ENCODE measurements at regions of chr17 and their contacts with region 1.

Region 1: DNA sequence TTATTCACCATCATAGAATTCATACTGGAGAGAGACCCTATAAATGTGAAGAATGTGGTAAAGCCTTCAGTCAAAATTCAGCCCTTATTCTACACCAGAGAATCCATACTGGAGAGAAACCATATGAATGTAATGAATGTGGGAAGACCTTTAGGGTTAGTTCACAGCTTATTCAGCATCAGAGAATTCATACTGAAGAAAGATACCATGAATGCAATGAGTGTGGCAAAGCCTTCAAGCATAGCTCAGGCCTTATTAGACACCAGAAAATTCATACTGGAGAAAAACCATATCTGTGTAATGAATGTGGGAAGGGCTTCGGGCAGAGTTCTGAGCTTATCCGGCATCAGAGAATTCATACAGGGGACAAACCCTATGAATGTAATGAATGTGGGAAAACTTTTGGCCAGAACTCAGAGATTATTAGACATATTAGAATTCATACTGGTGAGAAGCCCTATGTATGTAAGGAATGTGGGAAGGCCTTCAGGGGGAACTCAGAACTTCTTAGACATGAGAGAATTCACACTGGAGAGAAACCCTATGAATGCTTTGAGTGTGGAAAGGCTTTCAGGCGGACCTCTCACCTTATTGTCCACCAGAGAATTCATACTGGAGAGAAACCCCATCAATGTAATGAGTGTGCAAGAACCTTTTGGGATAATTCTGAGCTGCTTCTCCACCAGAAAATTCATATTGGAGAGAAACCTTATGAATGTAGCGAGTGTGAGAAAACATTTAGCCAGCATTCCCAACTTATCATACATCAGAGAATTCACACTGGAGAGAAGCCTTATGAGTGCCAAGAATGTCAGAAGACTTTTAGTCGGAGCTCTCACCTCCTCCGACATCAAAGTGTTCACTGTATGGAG is 14.1 kb downstream of the ZFP3 start:
- DNase-seq: no peak
- H3K4me3 ChIP-seq: peak overlapping the region in 1 of 3 donors; percentile 1
- H3K27ac ChIP-seq: no peak overlapping the region
- H3K4me1 ChIP-seq: no peaks in the 10 kb centered on the region
- H3K27me3 ChIP-seq: no peaks in the 10 kb centered on the region
- CTCF ChIP-seq: no peak

Region 2: DNA sequence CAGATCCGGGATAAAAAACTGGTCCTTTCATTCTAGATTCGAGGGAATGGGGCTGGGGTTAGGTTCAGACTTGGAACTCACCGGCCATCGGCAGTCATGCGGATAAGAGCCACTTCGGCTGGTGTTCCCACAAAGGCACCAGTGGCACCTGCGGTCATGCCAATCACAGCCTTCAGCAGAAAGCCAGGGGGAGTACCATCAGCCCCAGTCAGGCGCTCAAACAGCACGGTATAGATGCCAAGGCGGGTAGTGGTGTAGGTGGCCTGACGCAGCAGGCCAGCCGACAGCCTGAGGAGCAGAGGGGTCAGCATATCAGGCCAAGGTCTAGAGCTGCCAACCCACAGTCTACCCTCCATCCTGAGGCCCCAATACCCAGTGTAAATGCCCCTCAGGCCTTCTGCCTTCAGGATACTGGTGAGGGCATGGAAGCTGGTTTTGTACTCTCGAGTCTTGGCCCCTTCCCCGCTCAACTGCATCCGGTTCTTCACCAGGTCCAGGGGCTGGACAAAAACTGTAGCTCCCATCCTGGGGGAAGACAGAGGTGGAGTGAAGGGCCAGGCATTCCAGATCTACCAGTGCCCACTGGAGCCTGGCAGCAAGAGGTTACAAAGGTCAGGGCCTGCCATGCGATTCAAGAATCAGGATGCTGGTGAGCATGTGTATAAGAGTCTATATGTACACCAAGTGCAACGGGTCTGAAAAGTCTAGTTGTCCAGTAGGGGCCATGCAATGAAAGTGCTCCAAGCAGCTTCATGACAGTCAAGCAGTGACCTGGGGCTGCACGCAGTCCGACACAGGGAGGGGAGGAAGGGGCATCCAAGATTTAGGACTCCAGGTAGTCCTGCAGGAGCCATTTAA is 153.5 kb before region 1 on chr17:
- intact Hi-C with region 1: no loop called
- DNase-seq: peak in 2 of 5 donors; percentile 51 to 57
- H3K4me3 ChIP-seq: peak overlapping the region; percentile 80 to 95 (median 81)
- H3K27ac ChIP-seq: peak overlapping the region; percentile 86 to 87
- H3K4me1 ChIP-seq: peaks cover 5 to 32% (median 18%) of the 10 kb centered on the region in 3 donors
- H3K27me3 ChIP-seq: no peaks in the 10 kb centered on the region
- CTCF ChIP-seq: no peak

Region 3: GRCh38 chr17:4948931-4949320 is 143.4 kb before region 1 on chr17:
- intact Hi-C with region 1: no loop called
- DNase-seq: peak; percentile 89 to 97 (median 94)
- H3K4me3 ChIP-seq: peak overlapping the region; percentile 68 to 95 (median 85)
- H3K27ac ChIP-seq: peak overlapping the region; percentile 97 to 98
- H3K4me1 ChIP-seq: peaks cover 0 to 29% (median 14%) of the 10 kb centered on the region in 3 donors
- H3K27me3 ChIP-seq: no peaks in the 10 kb centered on the region
- CTCF ChIP-seq: no peak

Region 4: GRCh38 chr17:4966844-4967538 is 125.4 kb before region 1 on chr17:
- intact Hi-C with region 1: no loop called
- DNase-seq: peak; percentile 99 to 100 (median 100)
- H3K4me3 ChIP-seq: peak overlapping the region; percentile 93 to 99 (median 94)
- H3K27ac ChIP-seq: peak overlapping the region; percentile 98 to 99
- H3K4me1 ChIP-seq: peaks cover 3 to 28% (median 4%) of the 10 kb centered on the region in 3 donors
- H3K27me3 ChIP-seq: no peaks in the 10 kb centered on the region
- CTCF ChIP-seq: no peak

Region 5: DNA sequence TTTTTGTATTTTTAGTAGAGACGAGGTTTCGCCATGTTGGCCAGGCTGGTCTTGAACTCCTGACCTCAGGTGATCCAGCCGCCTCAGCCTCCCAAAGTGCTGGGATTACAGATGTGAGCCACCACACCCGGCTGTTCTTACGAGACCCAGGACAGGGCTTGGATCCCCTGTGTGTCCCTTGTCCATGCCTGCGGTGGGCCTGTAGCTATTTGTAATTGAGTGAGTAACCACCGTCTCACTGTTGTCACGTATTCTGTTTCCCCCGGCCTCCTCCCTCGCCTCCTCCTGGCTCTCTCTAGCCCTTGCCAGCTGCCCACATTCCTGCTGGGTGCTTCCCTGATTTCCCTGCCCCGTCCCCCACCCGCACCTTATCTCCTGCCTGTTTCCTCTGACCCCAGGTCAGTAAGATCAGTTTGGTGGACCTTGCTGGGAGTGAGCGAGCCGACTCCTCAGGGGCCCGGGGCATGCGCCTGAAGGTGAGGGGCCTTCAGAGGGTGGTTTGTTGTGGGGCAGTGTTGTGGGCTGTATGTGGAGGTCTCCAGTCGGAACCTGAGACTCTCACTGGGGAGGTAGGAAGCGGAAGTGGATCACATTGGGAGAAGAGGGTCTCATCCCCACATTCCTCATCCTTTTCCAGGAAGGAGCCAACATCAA is 89.0 kb before region 1 on chr17:
- intact Hi-C with region 1: no loop called
- DNase-seq: no peak
- H3K4me3 ChIP-seq: no peak overlapping the region
- H3K27ac ChIP-seq: no peak overlapping the region
- H3K4me1 ChIP-seq: peaks cover 0 to 15% (median 0%) of the 10 kb centered on the region in 3 donors
- H3K27me3 ChIP-seq: no peaks in the 10 kb centered on the region
- CTCF ChIP-seq: no peak

Region 6: GRCh38 chr17:5184288-5184687 is 91.9 kb after region 1 on chr17:
- intact Hi-C with region 1: loop called (anchors 5 kb)
- DNase-seq: no peak
- H3K4me3 ChIP-seq: no peak overlapping the region
- H3K27ac ChIP-seq: no peak overlapping the region
- H3K4me1 ChIP-seq: no peaks in the 10 kb centered on the region
- H3K27me3 ChIP-seq: no peaks in the 10 kb centered on the region
- CTCF ChIP-seq: no peak